SK-N-SH (cell line): ENCODE measurements at regions of chr3 and their contacts with region 1.

Region 1: DNA sequence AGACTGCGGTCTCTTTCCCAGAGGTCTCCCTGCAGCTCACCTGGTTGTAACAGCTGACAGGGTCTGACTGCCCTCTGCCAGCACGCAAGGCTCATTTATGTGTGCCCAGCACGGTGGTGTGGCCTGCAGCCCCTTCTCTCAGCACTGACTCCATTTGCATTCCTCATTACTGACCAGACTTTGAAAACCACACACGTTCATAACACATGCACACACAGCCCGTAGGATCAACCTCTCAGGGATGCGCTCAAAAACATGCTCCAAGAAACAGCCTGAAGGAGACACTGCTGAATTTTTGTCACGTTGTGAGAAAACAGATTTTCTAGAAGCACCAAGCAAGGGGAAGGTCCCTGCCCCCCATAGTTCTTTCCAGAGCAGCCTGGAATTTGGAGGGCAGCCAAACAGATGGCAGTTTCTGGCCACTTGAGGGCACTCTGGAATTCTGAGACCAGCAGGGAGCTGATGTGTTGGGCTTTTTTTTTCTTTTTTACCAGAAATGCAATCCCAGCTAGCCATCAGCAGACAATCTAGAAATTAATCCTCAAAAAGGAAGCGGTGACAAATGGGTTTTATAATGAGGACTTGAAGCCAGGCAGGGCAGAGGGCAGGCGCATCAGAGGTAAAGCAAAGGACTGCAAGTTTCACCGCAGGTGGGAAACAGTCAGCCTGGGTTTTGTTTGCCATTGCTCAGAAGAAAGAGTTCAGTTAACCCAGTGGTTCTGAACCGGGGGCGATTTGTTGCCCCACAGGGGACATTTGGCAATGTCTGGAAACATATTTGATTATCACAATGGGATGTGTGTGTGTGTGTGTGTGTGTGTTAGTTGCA is 170.5 kb upstream of the PROK2 start:
- DNase-seq: peak; percentile 77
- H3K4me3 ChIP-seq: no peak overlapping the region; a peak in 1 of 4 replicates
- H3K27ac ChIP-seq: peak overlapping the region in 1 of 2 experiments; percentile 95; a peak in 2 of 4 replicates
- H3K4me1 ChIP-seq: peaks cover 0 to 23% of the 10 kb centered on the region in 2 experiments; a peak in 2 of 4 replicates
- H3K27me3 ChIP-seq: peaks cover 6% of the 10 kb centered on the region; the same call in 1 of the 2 replicates
- CTCF ChIP-seq: peak; percentile 79
- EP300 ChIP-seq: peak in 1 of 2 experiments; percentile 96; a peak in 2 of 4 replicates
- RAD21 ChIP-seq: peak; percentile 95

Region 2: GRCh38 chr3:71504250-71505036 is 451.0 kb before region 1 on chr3:
- CTCF ChIA-PET with region 1: no interaction called
- POLR2A ChIA-PET with region 1: no interaction called
- DNase-seq: no peak
- H3K4me3 ChIP-seq: peak overlapping the region; percentile 22 to 38; a peak in 3 of 4 replicates
- H3K27ac ChIP-seq: peak overlapping the region; percentile 62 to 95
- H3K4me1 ChIP-seq: peaks cover 0 to 19% of the 10 kb centered on the region in 2 experiments; a peak in 3 of 4 replicates
- H3K27me3 ChIP-seq: no peaks in the 10 kb centered on the region
- CTCF ChIP-seq: no peak
- EP300 ChIP-seq: peak in 1 of 2 experiments; percentile 83; a peak in 2 of 4 replicates
- RAD21 ChIP-seq: no peak

Region 3: DNA sequence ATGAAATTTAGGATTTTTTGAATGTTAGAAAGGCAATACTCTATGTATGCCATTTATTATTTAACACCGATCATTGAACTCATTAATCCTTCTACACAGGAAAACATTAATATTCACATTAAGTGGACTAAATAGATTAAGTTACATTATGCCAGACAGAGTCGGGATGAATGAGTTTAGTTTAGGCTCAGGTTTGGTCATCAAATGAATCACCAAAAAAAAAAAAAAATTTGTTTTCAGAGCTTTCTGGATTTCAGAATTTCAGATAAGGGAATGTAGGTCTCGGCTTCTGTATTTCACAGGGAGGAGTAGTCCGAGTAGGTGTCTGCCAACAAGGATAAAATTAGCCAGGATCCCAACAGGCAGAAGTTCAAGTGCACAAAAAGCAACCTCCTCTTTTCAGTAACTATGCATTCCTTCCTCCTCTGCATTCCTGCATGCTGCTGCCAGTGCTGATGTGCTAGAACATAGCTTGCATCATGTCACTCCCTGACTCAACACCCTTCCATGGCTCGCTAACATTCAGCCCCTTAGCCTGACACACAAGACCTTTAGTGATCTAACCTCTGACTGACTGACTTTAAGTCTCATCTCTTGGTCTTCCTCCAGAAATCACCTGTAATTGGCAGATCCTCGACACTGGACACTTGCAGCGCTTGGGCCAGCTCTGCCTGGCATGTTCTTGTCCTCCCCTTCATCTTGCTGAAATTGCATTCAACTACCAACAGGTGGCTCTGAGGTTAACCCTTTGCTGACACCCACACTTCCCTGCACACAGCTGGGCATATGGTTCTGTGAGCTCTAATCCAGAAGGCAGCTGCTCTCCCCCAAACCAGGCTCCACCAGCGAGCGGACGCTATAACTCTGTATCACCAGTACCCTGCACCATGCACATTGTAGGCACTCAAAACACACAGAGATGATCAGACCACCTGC is 25.1 kb before region 1 on chr3:
- CTCF ChIA-PET with region 1: interaction called, 12 read pairs
- POLR2A ChIA-PET with region 1: no interaction called
- DNase-seq: peak; percentile 55
- H3K4me3 ChIP-seq: no peak overlapping the region
- H3K27ac ChIP-seq: no peak overlapping the region
- H3K4me1 ChIP-seq: peaks cover 0 to 6% of the 10 kb centered on the region in 2 experiments; a peak in 1 of 4 replicates
- H3K27me3 ChIP-seq: no peaks in the 10 kb centered on the region; the same call in 1 of the 2 replicates
- CTCF ChIP-seq: peak; percentile 40
- EP300 ChIP-seq: no peak
- RAD21 ChIP-seq: peak; percentile 29; the same call in 1 of the 2 replicates

Region 4: DNA sequence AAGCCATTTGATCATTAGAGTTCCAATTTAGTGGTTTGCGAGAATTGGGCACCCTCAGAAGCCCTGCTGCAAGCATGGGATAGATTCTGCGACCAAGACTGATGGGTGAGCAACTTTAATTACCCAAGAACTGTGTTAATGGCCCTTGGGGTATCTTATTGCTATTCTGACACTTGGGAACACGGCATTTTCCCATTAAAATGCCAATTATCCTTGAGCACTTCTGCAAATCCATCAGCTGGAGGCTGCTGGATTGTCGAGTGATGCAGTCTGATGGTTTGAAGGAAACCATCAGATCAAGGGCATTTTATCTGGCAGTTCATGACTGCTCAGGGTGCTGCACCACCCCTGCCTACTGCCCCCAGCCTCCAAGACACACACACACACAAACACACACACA is 13.1 kb after region 1 on chr3:
- CTCF ChIA-PET with region 1: no interaction called
- POLR2A ChIA-PET with region 1: no interaction called
- DNase-seq: no peak
- H3K4me3 ChIP-seq: no peak overlapping the region
- H3K27ac ChIP-seq: no peak overlapping the region
- H3K4me1 ChIP-seq: peaks cover 0 to 14% of the 10 kb centered on the region in 2 experiments; a peak in 1 of 4 replicates
- H3K27me3 ChIP-seq: no peaks in the 10 kb centered on the region
- CTCF ChIP-seq: no peak
- EP300 ChIP-seq: no peak
- RAD21 ChIP-seq: no peak

Region 5: DNA sequence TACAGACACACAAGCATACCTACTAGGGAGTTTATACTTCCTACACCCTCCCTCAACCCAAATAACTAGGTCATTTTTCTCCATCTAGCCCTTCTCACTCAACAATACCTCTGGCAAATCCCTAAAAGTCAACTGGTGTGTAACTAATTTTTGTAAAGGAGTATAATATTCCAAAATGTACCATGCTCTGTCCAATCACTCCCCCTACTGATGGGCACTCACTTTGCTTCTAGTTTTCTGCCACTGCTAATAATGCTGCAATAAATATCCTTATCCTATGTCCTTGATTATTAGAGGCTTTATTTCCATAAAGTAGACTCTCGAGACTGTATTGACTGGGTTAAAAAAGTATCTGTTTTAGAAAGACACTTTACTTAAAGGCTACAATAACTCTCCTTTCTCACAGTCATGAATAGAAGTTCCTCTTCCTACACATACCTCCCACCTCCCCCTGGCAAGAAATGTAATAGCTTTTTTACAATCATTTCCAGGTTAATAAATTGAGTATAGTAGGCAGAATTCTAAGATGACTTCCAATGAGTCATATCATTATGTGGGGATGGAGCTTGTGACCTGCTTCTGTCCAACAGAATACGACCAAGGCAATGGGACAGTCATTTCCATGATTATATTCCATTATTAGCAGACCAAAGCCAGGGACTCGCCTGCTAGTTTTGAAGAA is 862.8 kb after region 1 on chr3:
- CTCF ChIA-PET with region 1: interaction called, 68 read pairs
- POLR2A ChIA-PET with region 1: no interaction called
- DNase-seq: peak; percentile 54
- H3K4me3 ChIP-seq: no peak overlapping the region; a peak in 1 of 4 replicates
- H3K27ac ChIP-seq: peak overlapping the region in 1 of 2 experiments; percentile 61; a peak in 3 of 4 replicates
- H3K4me1 ChIP-seq: peaks cover 21 to 25% of the 10 kb centered on the region in 2 experiments
- H3K27me3 ChIP-seq: no peaks in the 10 kb centered on the region
- CTCF ChIP-seq: peak; percentile 67
- EP300 ChIP-seq: 0 out of 4 replicates have a peak, but pooled peaks of 1 of the 2 experiments have one; percentile 10
- RAD21 ChIP-seq: peak; percentile 95